Activated CD4-positive, alpha-beta T cell treated with anti-CD3 and anti-CD28 coated beads for 36 hours (primary cell): ENCODE measurements at regions of chr20 and their contacts with region 1.

Region 1: GRCh38 chr20:36050436-36051317 is 82.3 kb downstream of the CNBD2 start:
- DNase-seq: peak; percentile 95
- ATAC-seq: peak; percentile 98
- H3K4me3 Mint-ChIP-seq: peak overlapping the region; percentile 96
- H3K27ac Mint-ChIP-seq: peak overlapping the region; percentile 91
- H3K4me1 Mint-ChIP-seq: peaks cover 34% of the 10 kb centered on the region
- H3K27me3 Mint-ChIP-seq: no peaks in the 10 kb centered on the region

Region 2: GRCh38 chr20:36235892-36236785 is 185.5 kb after region 1 on chr20 and contains the start of gene AAR2:
- CTCF ChIA-PET with region 1: no interaction called
- POLR2A ChIA-PET with region 1: no interaction called
- intact Hi-C with region 1: loop called in 1 of 2 experiments (anchors 1 kb)
- DNase-seq: peak; percentile 91
- ATAC-seq: peak; percentile 99
- H3K4me3 Mint-ChIP-seq: peak within 1 kb of the TSS; percentile 78
- H3K27ac Mint-ChIP-seq: peak within 1 kb of the TSS; percentile 81
- H3K4me1 Mint-ChIP-seq: peaks cover 32% of the 10 kb centered on the region
- H3K27me3 Mint-ChIP-seq: no peaks in the 10 kb centered on the region
- total RNA-seq, gene AAR2: 18.7 to 20.7 TPM